Activated naive CD4-positive, alpha-beta T cell treated with anti-CD3 and anti-CD28 coated beads for 36 hours (primary cell): ENCODE measurements at regions of chr4 and their contacts with region 1.

Region 1: GRCh38 chr4:128287871-128288688 is 467 bp upstream of the PGRMC2 start:
- DNase-seq: peak; percentile 100
- H3K4me3 Mint-ChIP-seq: peak overlapping the region; percentile 76
- H3K27ac Mint-ChIP-seq: peak overlapping the region; percentile 92
- H3K4me1 Mint-ChIP-seq: peaks cover 27% of the 10 kb centered on the region
- H3K27me3 Mint-ChIP-seq: no peaks in the 10 kb centered on the region

Region 2: GRCh38 chr4:127140306-127140705 is 1147.8 kb before region 1 on chr4:
- CTCF ChIA-PET with region 1: no interaction called
- intact Hi-C with region 1: no loop called
- DNase-seq: no peak
- H3K4me3 Mint-ChIP-seq: no peak overlapping the region
- H3K27ac Mint-ChIP-seq: no peak overlapping the region
- H3K4me1 Mint-ChIP-seq: no peaks in the 10 kb centered on the region
- H3K27me3 Mint-ChIP-seq: no peaks in the 10 kb centered on the region

Region 3: GRCh38 chr4:127632420-127633403 is 655.4 kb before region 1 on chr4 and contains the start of gene INTU:
- CTCF ChIA-PET with region 1: no interaction called
- intact Hi-C with region 1: loop called (anchors 2 kb)
- DNase-seq: peak; percentile 61
- H3K4me3 Mint-ChIP-seq: peak within 1 kb of the TSS; percentile 78
- H3K27ac Mint-ChIP-seq: no peak within 1 kb of the TSS
- H3K4me1 Mint-ChIP-seq: peaks cover 12% of the 10 kb centered on the region
- H3K27me3 Mint-ChIP-seq: peaks cover 51% of the 10 kb centered on the region
- total RNA-seq, gene INTU: 0.12 to 0.52 TPM

Region 4: GRCh38 chr4:127965062-127965802 is 322.8 kb before region 1 on chr4 and contains the starts of genes ABHD18 and MFSD8:
- CTCF ChIA-PET with region 1: no interaction called
- intact Hi-C with region 1: loop called (anchors 1 kb)
- DNase-seq: peak; percentile 99
- H3K4me3 Mint-ChIP-seq: peak within 1 kb of the TSS; percentile 93
- H3K27ac Mint-ChIP-seq: peak within 1 kb of the TSS; percentile 96
- H3K4me1 Mint-ChIP-seq: peaks cover 32% of the 10 kb centered on the region
- H3K27me3 Mint-ChIP-seq: no peaks in the 10 kb centered on the region
- total RNA-seq, gene ABHD18: 17.0 to 17.5 TPM
- total RNA-seq, gene MFSD8: 11.1 to 11.2 TPM

Region 5: DNA sequence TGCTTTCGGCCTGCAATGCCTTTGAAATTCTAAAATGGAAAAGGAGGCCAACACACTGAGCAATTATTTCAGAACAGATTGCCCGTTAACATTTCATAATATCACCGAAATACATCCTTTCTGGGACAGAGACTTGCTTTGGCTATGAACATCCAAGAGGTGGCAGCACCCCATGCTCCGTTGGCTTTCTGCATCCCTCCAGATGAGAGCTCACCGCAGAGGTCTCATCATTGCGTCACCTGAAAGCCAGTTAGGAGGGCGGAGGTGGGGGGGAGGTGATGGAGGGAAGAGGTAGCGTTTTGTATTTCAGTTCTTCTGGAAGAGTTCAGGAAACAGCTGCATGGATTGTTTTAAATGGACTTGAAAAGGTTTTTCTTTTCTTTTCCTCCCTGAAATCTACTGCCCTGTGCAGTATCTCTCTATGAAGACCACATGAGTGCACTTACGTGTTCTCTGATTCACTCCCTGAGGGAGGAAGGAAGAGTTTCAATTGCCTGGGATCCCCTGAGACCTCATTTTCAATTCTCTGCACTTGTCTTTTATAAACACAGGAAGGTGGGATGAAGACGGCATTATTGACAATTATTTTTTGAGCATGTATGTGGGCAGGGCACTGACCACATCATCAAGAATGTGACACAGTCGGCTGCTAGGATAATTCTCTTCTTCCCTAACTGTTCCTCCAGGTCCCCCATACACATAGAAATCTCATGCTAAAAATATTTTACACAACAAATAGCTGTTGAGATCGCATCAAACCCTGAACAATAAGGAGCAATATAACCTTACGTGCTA is 166.4 kb after region 1 on chr4:
- CTCF ChIA-PET with region 1: no interaction called
- intact Hi-C with region 1: loop called (anchors 2 kb)
- DNase-seq: peak; percentile 84
- H3K4me3 Mint-ChIP-seq: peak overlapping the region; percentile 21
- H3K27ac Mint-ChIP-seq: no peak overlapping the region
- H3K4me1 Mint-ChIP-seq: peaks cover 8% of the 10 kb centered on the region
- H3K27me3 Mint-ChIP-seq: no peaks in the 10 kb centered on the region

Region 6: GRCh38 chr4:128565565-128566186 is 277.6 kb after region 1 on chr4:
- CTCF ChIA-PET with region 1: no interaction called
- intact Hi-C with region 1: loop called (anchors 5 kb)
- DNase-seq: peak; percentile 50
- H3K4me3 Mint-ChIP-seq: no peak overlapping the region
- H3K27ac Mint-ChIP-seq: no peak overlapping the region
- H3K4me1 Mint-ChIP-seq: no peaks in the 10 kb centered on the region
- H3K27me3 Mint-ChIP-seq: peaks cover 7% of the 10 kb centered on the region

Region 7: GRCh38 chr4:129093191-129093920 is 805.3 kb after region 1 on chr4 and contains the start of gene SCLT1:
- CTCF ChIA-PET with region 1: no interaction called
- intact Hi-C with region 1: loop called (anchors 1 kb)
- DNase-seq: peak; percentile 98
- H3K4me3 Mint-ChIP-seq: peak within 1 kb of the TSS; percentile 55
- H3K27ac Mint-ChIP-seq: no peak within 1 kb of the TSS
- H3K4me1 Mint-ChIP-seq: peaks cover 31% of the 10 kb centered on the region
- H3K27me3 Mint-ChIP-seq: no peaks in the 10 kb centered on the region
- total RNA-seq, gene SCLT1: 20.3 to 21.1 TPM